ENCODE measurements at regions of chr12 and their contacts with region 1.

Region 1: GRCh38 chr12:49130151-49131050 is 794 bp downstream of the TUBA1B start:
- DNase-seq: peak; percentile 91
- H3K4me3 Mint-ChIP-seq: peak overlapping the region; percentile 94
- H3K27ac Mint-ChIP-seq: peak overlapping the region; percentile 96
- H3K4me1 Mint-ChIP-seq: no peaks in the 10 kb centered on the region
- H3K27me3 Mint-ChIP-seq: no peaks in the 10 kb centered on the region
- CTCF ChIP-seq: peak; percentile 91

Region 2: DNA sequence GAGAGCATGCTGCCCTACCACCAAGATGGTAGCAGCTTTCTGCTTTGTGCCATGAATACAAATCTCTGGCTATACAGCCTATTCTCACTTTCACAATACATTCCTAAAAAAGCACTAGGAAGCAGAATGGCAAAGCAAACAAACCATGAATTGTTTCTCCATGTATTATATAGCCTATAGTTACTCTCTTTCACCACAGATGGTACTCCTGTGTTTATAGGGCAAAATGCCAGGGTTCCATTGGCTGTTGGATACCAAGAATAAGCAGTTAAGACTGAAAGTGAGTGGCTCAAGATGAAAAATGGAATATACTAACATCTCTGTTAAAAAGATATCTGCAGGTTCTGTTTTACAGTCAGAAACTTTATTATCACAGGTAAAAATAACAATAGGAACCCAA is 184.2 kb before region 1 on chr12:
- CTCF ChIA-PET with region 1: no interaction called
- POLR2A ChIA-PET with region 1: no interaction called
- intact Hi-C with region 1: no loop called
- DNase-seq: no peak
- H3K4me3 Mint-ChIP-seq: no peak overlapping the region
- H3K27ac Mint-ChIP-seq: no peak overlapping the region
- H3K4me1 Mint-ChIP-seq: peaks cover 21% of the 10 kb centered on the region
- H3K27me3 Mint-ChIP-seq: no peaks in the 10 kb centered on the region
- CTCF ChIP-seq: no peak

Region 3: GRCh38 chr12:48957141-48958048 is 173.0 kb before region 1 on chr12 and contains the start of gene ARF3:
- CTCF ChIA-PET with region 1: no interaction called
- POLR2A ChIA-PET with region 1: interaction called, 12 read pairs
- intact Hi-C with region 1: no loop called
- DNase-seq: peak; percentile 92
- H3K4me3 Mint-ChIP-seq: peak within 1 kb of the TSS; percentile 99
- H3K27ac Mint-ChIP-seq: peak within 1 kb of the TSS; percentile 93
- H3K4me1 Mint-ChIP-seq: peaks cover 34% of the 10 kb centered on the region
- H3K27me3 Mint-ChIP-seq: no peaks in the 10 kb centered on the region
- CTCF ChIP-seq: no peak
- total RNA-seq, gene ARF3: 117 and 129 TPM in 2 replicates

Region 4: DNA sequence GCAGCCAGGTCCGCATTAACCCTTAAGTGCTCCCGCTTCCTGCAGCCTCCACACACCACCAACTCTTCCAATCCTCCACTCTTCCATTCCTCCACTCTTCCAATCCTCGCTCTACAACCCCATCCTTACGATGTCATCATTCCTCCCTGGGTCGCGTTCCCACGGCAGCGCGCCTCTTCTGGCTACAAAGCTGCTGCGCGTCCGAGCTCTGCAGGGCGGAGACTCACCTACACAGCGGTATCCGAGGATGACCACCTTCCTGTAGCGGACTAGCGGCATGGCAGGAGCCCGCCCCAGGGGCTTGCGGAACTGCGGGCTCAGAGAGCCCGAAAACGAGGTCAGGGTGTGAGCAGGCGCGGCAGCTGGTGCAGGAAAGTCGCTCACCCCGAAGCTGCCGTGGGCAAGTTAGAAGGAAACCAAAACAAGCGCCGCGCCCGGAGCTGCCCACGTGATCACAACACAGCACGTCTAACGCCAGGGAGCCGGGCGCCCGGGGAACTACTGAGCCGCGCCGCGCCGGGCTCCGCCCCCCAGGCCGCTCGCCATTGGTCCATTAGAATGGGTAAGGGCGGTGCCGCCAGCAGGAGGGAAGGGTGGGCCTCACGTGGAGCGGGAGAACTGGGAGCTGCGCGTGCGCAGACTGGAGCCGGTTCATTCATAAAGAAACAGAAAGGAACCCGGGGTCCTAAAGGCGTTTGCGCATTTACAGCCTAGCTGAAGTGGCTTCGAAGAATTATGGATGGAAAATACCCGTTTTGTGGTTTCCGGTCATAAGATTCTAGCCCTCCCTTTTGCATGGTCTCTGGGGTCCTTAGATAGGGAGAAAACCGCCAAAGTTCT is 60.7 kb before region 1 on chr12 and contains the start of gene RHEBL1:
- CTCF ChIA-PET with region 1: interaction called, 6 read pairs
- POLR2A ChIA-PET with region 1: interaction called, 36 read pairs
- intact Hi-C with region 1: loop called (anchors 2 kb)
- DNase-seq: peak; percentile 98
- H3K4me3 Mint-ChIP-seq: peak within 1 kb of the TSS; percentile 83
- H3K27ac Mint-ChIP-seq: peak within 1 kb of the TSS; percentile 73
- H3K4me1 Mint-ChIP-seq: peaks cover 18% of the 10 kb centered on the region
- H3K27me3 Mint-ChIP-seq: no peaks in the 10 kb centered on the region
- CTCF ChIP-seq: no peak
- total RNA-seq, gene RHEBL1: 0.35 and 0.93 TPM in 2 replicates

Region 5: DNA sequence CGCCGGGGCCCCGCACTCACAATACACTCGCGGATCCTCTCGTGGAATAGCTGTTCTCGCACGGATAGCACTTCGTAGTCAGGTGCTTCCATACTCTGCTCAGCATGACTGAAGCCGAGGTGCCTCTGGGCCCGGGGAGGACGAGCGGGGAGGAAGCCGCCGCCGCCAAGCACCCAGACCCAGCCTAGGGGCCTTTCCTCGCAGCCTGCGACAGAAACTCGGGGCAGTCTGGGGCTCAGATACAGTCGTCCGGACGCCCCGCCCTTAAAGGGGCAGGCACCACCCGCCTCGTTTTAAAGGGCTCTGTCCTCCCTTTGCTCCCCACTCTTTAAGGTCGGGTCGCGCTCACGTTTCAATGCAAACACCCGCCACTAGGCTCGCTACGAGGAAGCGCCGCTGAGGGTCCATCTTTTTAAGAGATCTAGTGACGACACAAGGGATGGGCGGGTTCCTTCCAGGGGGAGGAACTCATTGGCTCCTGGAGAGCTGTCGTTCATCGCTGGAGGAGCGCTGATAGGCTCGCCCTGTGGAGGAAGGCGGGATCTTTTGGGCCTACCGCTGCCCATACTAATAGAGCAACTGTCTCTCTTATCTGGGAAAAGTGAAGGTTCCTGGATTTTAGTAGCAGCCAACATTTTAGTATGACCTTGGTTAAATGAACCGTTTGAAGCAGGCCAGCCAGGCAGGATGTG is 19.8 kb before region 1 on chr12 and contains the start of gene LMBR1L:
- CTCF ChIA-PET with region 1: interaction called, 23 read pairs
- POLR2A ChIA-PET with region 1: interaction called, 150 read pairs
- intact Hi-C with region 1: no loop called
- DNase-seq: peak; percentile 99
- H3K4me3 Mint-ChIP-seq: peak within 1 kb of the TSS; percentile 86
- H3K27ac Mint-ChIP-seq: peak within 1 kb of the TSS; percentile 97
- H3K4me1 Mint-ChIP-seq: peaks cover 18% of the 10 kb centered on the region
- H3K27me3 Mint-ChIP-seq: no peaks in the 10 kb centered on the region
- CTCF ChIP-seq: peak; percentile 14
- total RNA-seq, gene LMBR1L: 27.8 and 35.7 TPM in 2 replicates

Region 6: DNA sequence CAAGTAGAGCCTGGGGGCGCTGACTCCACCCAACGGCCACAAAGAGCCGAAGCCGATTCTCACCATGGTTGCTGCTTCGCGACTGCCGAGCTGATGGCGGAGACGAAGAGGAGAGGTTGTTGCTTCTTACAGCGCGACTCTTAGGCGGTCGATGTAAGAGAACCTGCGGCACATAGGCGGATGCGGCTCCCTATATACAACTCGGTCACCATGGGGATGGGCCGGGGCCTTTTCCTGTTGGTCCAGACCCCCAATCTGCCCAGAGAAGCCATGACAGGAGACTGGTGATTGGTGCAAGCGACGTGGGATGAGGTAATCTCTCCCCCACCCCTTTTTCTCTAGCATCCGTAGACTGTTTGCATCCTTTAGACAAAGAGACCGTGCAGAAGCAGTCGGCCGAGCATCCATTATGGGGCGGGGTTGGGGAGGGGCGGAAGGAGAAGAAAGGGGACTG is 58.5 kb after region 1 on chr12 and contains the start of gene TUBA1A:
- CTCF ChIA-PET with region 1: interaction called, 6 read pairs
- POLR2A ChIA-PET with region 1: interaction called, 164 read pairs
- intact Hi-C with region 1: loop called (anchors 2 kb)
- DNase-seq: peak; percentile 68
- H3K4me3 Mint-ChIP-seq: peak within 1 kb of the TSS; percentile 91
- H3K27ac Mint-ChIP-seq: peak within 1 kb of the TSS; percentile 89
- H3K4me1 Mint-ChIP-seq: peaks cover 12% of the 10 kb centered on the region
- H3K27me3 Mint-ChIP-seq: peaks cover 22% of the 10 kb centered on the region
- CTCF ChIP-seq: no peak
- total RNA-seq, gene TUBA1A: 9.8 and 10.4 TPM in 2 replicates

Region 7: DNA sequence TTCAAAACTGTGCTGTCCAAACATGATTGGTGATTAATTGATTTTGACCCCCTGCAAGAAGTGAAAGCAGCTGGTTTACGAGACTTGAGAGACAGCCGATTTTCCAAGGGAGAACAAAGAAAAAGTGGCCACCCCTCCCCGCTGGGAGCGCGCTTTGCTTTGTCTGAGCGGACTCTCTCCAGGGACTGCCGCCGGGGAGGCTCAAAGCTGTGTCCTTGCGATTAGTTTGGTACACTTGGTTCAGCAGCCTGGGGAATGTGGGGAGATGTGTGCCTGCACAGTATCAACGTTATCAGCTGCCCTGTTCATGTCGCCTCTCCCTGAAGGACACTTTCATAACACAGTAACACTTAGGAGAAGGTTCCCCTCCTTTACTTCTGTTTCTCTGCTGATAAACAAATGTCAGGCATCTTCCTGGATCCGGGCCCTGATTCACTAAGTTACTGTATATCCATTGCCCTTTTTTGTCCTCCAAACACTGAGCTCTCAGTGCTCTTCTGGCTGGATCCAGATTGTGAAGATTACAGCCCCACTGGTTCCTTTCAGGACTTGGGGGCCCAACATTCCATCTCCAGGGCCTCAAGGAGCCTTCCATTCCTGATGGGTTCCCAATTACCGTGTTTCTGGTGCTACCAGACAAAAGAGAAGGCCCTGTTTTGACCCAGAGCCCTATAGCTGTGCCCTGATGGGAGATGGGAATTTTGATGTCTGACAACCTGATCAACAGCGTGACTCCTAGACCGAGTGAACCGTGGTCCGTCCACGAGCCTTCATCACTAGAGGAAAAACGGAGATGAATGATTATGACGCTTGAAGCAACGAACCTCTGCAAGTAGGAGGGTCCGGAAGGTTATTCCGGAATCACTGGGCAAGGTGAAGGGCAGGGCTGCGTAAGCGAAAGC is 102.8 kb after region 1 on chr12:
- CTCF ChIA-PET with region 1: interaction called, 13 read pairs
- POLR2A ChIA-PET with region 1: interaction called, 38 read pairs
- intact Hi-C with region 1: loop called (anchors 1 kb)
- DNase-seq: no peak
- H3K4me3 Mint-ChIP-seq: peak overlapping the region; percentile 32
- H3K27ac Mint-ChIP-seq: no peak overlapping the region
- H3K4me1 Mint-ChIP-seq: peaks cover 5% of the 10 kb centered on the region
- H3K27me3 Mint-ChIP-seq: no peaks in the 10 kb centered on the region
- CTCF ChIP-seq: no peak

Region 8: DNA sequence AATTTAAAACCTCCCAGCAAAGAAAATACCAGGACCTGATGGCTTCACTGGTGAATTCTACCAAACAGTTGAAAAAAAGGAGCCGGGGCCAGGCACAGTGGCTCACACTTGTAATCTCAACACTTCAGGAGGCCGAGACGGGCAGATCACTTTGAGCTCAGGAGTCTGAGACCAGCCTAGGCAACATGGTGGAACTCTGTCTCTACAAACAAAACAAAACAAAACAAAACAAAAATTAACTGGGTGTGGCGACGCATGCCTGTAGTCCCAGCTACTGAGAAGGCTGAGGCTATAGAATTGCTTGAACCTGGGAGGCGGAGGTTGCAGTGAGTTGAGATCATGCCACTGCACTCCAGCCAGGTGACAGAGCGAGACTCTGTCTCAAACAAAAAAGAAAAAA is 179.0 kb after region 1 on chr12:
- CTCF ChIA-PET with region 1: no interaction called
- POLR2A ChIA-PET with region 1: no interaction called
- intact Hi-C with region 1: no loop called
- DNase-seq: no peak
- H3K4me3 Mint-ChIP-seq: no peak overlapping the region
- H3K27ac Mint-ChIP-seq: no peak overlapping the region
- H3K4me1 Mint-ChIP-seq: no peaks in the 10 kb centered on the region
- H3K27me3 Mint-ChIP-seq: no peaks in the 10 kb centered on the region
- CTCF ChIP-seq: no peak

Region 9: GRCh38 chr12:49366652-49367380 is 236.4 kb after region 1 on chr12:
- CTCF ChIA-PET with region 1: no interaction called
- POLR2A ChIA-PET with region 1: interaction called, 20 read pairs
- intact Hi-C with region 1: no loop called
- DNase-seq: peak; percentile 89
- H3K4me3 Mint-ChIP-seq: peak overlapping the region; percentile 80
- H3K27ac Mint-ChIP-seq: peak overlapping the region; percentile 33
- H3K4me1 Mint-ChIP-seq: peaks cover 24% of the 10 kb centered on the region
- H3K27me3 Mint-ChIP-seq: no peaks in the 10 kb centered on the region
- CTCF ChIP-seq: peak; percentile 6

Region 10: GRCh38 chr12:49456131-49456679 is 325.8 kb after region 1 on chr12:
- CTCF ChIA-PET with region 1: no interaction called
- POLR2A ChIA-PET with region 1: no interaction called
- intact Hi-C with region 1: no loop called
- DNase-seq: no peak
- H3K4me3 Mint-ChIP-seq: no peak overlapping the region
- H3K27ac Mint-ChIP-seq: no peak overlapping the region
- H3K4me1 Mint-ChIP-seq: no peaks in the 10 kb centered on the region
- H3K27me3 Mint-ChIP-seq: no peaks in the 10 kb centered on the region
- CTCF ChIP-seq: no peak

Region 11: GRCh38 chr12:50400598-50401364 is 1270.4 kb after region 1 on chr12 and contains the start of gene LARP4:
- CTCF ChIA-PET with region 1: no interaction called
- POLR2A ChIA-PET with region 1: no interaction called
- intact Hi-C with region 1: no loop called
- DNase-seq: peak; percentile 96
- H3K4me3 Mint-ChIP-seq: peak within 1 kb of the TSS; percentile 97
- H3K27ac Mint-ChIP-seq: peak within 1 kb of the TSS; percentile 89
- H3K4me1 Mint-ChIP-seq: peaks cover 7% of the 10 kb centered on the region
- H3K27me3 Mint-ChIP-seq: no peaks in the 10 kb centered on the region
- CTCF ChIP-seq: no peak
- total RNA-seq, gene LARP4: 73.6 and 78.8 TPM in 2 replicates

Measured in MCF 10A (cell line).